Gastrocnemius medialis (tissue), 4 donors: ENCODE measurements at regions of chr2 and their contacts with region 1.

Region 1: GRCh38 chr2:46650556-46651001 is 171.2 kb downstream of the TMEM247 start:
- DNase-seq: peak; percentile 30 to 62
- ATAC-seq: peak; percentile 75 to 86
- H3K4me3 ChIP-seq: no peak overlapping the region
- H3K27ac ChIP-seq: no peak overlapping the region
- H3K4me1 ChIP-seq: peaks cover 0 to 4% of the 10 kb centered on the region in 2 donors
- H3K27me3 ChIP-seq: no peaks in the 10 kb centered on the region
- CTCF ChIP-seq: peak; percentile 82 to 98 (median 92)
- POLR2A ChIP-seq: no peak

Region 2: DNA sequence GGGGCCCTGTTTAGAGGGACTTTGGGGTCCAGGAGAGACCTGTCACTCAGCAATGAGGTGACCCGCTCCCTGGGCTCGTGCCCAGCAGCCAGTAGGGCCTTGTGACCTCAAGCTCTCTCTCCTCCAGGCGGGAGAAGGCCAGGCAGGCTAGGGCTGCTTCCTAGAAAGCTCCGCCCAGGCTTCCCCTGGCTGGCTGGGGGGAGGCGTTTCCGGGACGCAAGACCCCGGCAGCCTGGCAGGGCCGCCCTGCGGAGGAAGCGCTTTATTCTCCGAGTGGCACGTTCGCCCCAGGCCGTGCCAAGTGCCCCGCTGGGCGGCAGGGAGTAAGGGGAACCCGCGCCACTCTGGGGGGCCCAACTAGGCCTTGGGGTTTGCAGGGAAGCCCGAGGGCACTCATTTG is 374.6 kb before region 1 on chr2:
- in situ Hi-C with region 1: no loop called
- intact Hi-C with region 1: no loop called
- DNase-seq: peak in 1 of 2 donors; percentile 30
- ATAC-seq: peak; percentile 37 to 43
- H3K4me3 ChIP-seq: no peak overlapping the region
- H3K27ac ChIP-seq: peak overlapping the region in 3 of 4 donors; percentile 26 to 64 (median 54)
- H3K4me1 ChIP-seq: peaks cover 0 to 19% of the 10 kb centered on the region in 2 donors
- H3K27me3 ChIP-seq: no peaks in the 10 kb centered on the region
- CTCF ChIP-seq: no peak
- POLR2A ChIP-seq: peak in 1 of 2 donors; percentile 9

Region 3: DNA sequence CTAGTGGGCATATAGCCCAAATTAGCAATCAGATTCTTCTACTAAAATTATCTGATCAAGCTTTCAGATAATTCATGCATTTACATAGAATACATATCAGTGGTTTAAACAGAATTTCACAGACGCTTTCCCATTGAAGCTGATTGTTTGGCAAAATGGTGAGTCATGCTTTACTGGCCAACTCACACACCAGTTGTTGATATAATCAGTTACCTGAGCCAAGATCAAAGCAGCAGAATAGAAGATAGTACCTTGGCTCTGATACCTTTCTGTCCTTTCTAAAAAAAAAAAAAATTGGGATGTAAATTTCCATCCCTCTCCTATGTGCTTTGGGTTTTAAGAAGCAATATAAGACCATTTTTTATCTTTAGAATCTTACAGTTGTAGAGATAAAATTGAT is 87.0 kb after region 1 on chr2:
- in situ Hi-C with region 1: no loop called
- intact Hi-C with region 1: no loop called
- DNase-seq: no peak
- ATAC-seq: peak in 1 of 2 donors; percentile 33
- H3K4me3 ChIP-seq: no peak overlapping the region
- H3K27ac ChIP-seq: peak overlapping the region in 3 of 4 donors; percentile 7 to 59 (median 8)
- H3K4me1 ChIP-seq: peaks cover 30 to 48% of the 10 kb centered on the region in 2 donors
- H3K27me3 ChIP-seq: no peaks in the 10 kb centered on the region
- CTCF ChIP-seq: no peak
- POLR2A ChIP-seq: no peak

Region 4: DNA sequence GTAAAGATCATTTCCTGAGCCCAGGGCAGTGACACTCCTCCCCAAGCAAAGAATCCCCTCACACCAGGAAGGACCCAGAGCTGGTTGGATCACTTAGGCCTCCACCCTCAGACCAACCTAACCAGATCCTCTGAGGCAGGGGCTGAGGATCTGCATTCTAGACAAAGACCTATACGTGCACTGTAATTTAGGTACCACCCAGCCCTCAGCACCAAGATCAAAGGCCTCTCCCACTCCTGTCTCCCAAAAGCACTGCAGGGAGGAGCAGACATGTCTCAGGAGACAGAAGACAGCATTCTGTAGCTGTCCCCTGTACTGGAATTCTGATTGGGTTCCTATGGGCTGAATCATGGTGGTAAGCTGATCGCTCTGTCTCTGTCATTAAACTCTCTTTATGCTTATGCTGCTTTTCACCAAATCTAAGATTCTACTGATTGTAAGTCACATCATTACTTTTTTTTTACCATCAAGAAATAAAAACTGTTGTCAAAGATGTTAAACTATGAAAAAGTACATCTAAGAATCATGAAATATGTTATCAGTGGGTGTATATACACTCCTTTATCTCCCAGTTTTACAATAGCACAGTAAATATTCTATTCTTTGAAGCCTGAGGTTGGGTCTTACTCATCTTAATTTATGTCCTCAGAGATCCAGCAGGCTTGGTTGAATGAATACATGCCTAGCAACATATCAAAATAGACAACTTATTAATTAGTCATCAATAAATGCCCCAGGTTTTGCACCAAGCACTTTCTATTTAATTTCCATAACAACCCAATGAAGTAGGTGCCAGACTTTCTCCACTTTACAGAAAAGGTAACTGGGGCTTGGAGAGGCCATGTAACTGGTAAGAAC is 236.7 kb after region 1 on chr2:
- in situ Hi-C with region 1: no loop called
- intact Hi-C with region 1: loop called (anchors 5 kb)
- DNase-seq: no peak
- ATAC-seq: no peak
- H3K4me3 ChIP-seq: no peak overlapping the region
- H3K27ac ChIP-seq: no peak overlapping the region
- H3K4me1 ChIP-seq: peaks cover 4 to 13% of the 10 kb centered on the region in 2 donors
- H3K27me3 ChIP-seq: no peaks in the 10 kb centered on the region
- CTCF ChIP-seq: no peak
- POLR2A ChIP-seq: no peak